Mammary epithelial cell (primary cell): ENCODE measurements at regions of chr1 and their contacts with region 1.

Region 1: GRCh38 chr1:162230096-162230495 is 146.6 kb downstream of the SPATA46 start:
- DNase-seq: no peak
- H3K4me3 ChIP-seq: no peak overlapping the region
- H3K27ac ChIP-seq: no peak overlapping the region
- H3K4me1 ChIP-seq: no peaks in the 10 kb centered on the region
- H3K27me3 ChIP-seq: no peaks in the 10 kb centered on the region
- CTCF ChIP-seq: peak in 1 of 2 donors; percentile 41

Region 2: DNA sequence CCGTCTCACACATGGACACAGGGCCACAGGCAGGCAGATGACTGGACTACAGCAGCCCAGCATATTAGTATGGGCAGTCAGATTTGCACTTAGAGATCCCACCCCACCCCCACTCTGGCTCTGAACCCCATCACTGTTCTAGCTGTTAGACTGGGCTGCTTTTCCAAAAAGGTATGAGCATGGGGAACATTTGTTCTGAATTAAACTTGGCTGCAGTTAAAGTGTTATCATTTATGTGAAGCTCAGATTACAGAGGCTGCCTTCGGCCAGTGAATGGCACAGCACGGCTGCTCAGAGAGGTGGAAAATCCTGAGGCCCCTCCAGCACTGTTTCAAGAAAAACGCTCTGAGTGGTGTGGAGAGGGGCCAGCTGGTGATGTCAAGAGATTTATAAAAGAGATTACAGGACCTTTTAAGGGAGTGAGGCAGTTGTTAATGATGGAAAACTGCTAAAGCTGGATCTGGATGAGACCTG is 167.5 kb before region 1 on chr1:
- CTCF ChIA-PET with region 1: interaction called, 11 read pairs
- dilution Hi-C with region 1: no loop called
- in situ Hi-C with region 1: no loop called
- intact Hi-C with region 1: no loop called
- DNase-seq: no peak
- H3K4me3 ChIP-seq: no peak overlapping the region
- H3K27ac ChIP-seq: no peak overlapping the region
- H3K4me1 ChIP-seq: peaks cover 6% of the 10 kb centered on the region
- H3K27me3 ChIP-seq: no peaks in the 10 kb centered on the region
- CTCF ChIP-seq: no peak

Region 3: GRCh38 chr1:162710345-162710744 is 480.2 kb after region 1 on chr1:
- CTCF ChIA-PET with region 1: no interaction called
- dilution Hi-C with region 1: no loop called
- in situ Hi-C with region 1: no loop called
- intact Hi-C with region 1: no loop called
- DNase-seq: no peak
- H3K4me3 ChIP-seq: no peak overlapping the region
- H3K27ac ChIP-seq: no peak overlapping the region
- H3K4me1 ChIP-seq: no peaks in the 10 kb centered on the region
- H3K27me3 ChIP-seq: no peaks in the 10 kb centered on the region
- CTCF ChIP-seq: no peak